Ovary (tissue), 10 donors: ENCODE measurements at regions of chr12 and their contacts with region 1.

Region 1: GRCh38 chr12:113174461-113175384 is 10.6 kb downstream of the DDX54 start:
- DNase-seq: peak; percentile 51 to 85 (median 76)
- H3K4me3 ChIP-seq: no peak overlapping the region
- H3K27ac ChIP-seq: no peak overlapping the region
- H3K4me1 ChIP-seq: peaks cover 4% of the 10 kb centered on the region
- H3K27me3 ChIP-seq: no peaks in the 10 kb centered on the region
- CTCF ChIP-seq: peak; percentile 70 to 82 (median 75)
- EP300 ChIP-seq: no peak
- POLR2A ChIP-seq: no peak

Region 2: GRCh38 chr12:113048716-113049127 is 126.0 kb before region 1 on chr12:
- intact Hi-C with region 1: loop called in 3 of 4 experiments (anchors 5 to 10 kb)
- DNase-seq: peak in 2 of 5 donors; percentile 17 to 52
- H3K4me3 ChIP-seq: no peak overlapping the region
- H3K27ac ChIP-seq: no peak overlapping the region
- H3K4me1 ChIP-seq: no peaks in the 10 kb centered on the region
- H3K27me3 ChIP-seq: no peaks in the 10 kb centered on the region
- CTCF ChIP-seq: peak; percentile 41 to 54 (median 43)
- EP300 ChIP-seq: no peak
- POLR2A ChIP-seq: no peak

Region 3: GRCh38 chr12:113439606-113440030 is 264.9 kb after region 1 on chr12:
- intact Hi-C with region 1: loop called in 1 of 4 experiments (anchors 10 kb)
- DNase-seq: peak in 4 of 5 donors; percentile 42 to 57 (median 46)
- H3K4me3 ChIP-seq: no peak overlapping the region
- H3K27ac ChIP-seq: no peak overlapping the region
- H3K4me1 ChIP-seq: no peaks in the 10 kb centered on the region
- H3K27me3 ChIP-seq: no peaks in the 10 kb centered on the region
- CTCF ChIP-seq: no peak
- EP300 ChIP-seq: no peak
- POLR2A ChIP-seq: no peak